ENCODE measurements at regions of chr7 and their contacts with region 1.

Region 1: GRCh38 chr7:151017953-151018420 is 6.3 kb downstream of the ATG9B start:
- DNase-seq: peak; percentile 83
- ATAC-seq: peak; percentile 72
- H3K4me3 Mint-ChIP-seq: peak overlapping the region; percentile 85
- H3K27ac Mint-ChIP-seq: no peak overlapping the region
- H3K4me1 Mint-ChIP-seq: peaks cover 45% of the 10 kb centered on the region
- H3K27me3 Mint-ChIP-seq: peaks cover 32% of the 10 kb centered on the region
- CTCF ChIP-seq: peak; percentile 78

Region 2: DNA sequence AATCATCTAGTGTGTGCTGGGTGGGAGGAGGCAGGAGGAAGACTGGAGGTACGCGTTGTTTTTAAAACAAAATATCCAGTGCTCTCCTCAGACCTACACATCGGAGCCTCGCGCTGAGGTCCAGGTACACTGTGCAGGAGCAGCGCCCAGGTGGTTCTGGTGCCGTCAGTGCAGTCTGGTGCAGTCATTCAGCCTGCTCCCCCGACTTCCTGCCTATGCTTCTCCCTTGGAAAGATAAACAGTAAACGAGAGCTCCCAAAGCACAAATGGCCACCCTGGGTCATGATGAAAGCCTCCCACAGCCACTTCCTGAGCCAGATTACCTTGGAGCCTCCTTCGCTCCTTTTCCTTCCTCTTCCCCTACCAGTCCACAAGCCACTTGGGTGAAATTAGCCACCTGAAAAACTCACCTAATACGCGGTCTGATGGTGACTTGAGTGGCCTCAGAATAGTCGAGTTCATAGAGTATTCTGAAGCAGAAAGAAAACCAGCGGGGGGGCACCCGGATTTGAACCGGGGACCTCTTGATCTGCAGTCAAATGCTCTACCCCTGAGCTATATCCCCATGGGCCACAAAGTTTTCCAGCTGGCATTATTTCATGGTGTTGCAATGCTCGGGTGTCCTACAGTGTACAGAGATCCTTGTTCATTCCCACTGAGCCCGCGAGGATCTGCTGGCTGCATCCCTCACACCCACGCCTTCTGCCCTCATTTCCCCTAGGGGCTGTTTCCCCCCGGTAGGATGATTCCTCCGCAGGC is 1327.1 kb before region 1 on chr7:
- CTCF ChIA-PET with region 1: no interaction called
- POLR2A ChIA-PET with region 1: no interaction called
- intact Hi-C with region 1: no loop called
- DNase-seq: no peak
- ATAC-seq: no peak
- H3K4me3 Mint-ChIP-seq: no peak overlapping the region
- H3K27ac Mint-ChIP-seq: no peak overlapping the region
- H3K4me1 Mint-ChIP-seq: no peaks in the 10 kb centered on the region
- H3K27me3 Mint-ChIP-seq: peaks cover 51% of the 10 kb centered on the region
- CTCF ChIP-seq: no peak

Region 3: GRCh38 chr7:150595361-150595760 is 422.6 kb before region 1 on chr7:
- CTCF ChIA-PET with region 1: no interaction called
- POLR2A ChIA-PET with region 1: no interaction called
- intact Hi-C with region 1: no loop called
- DNase-seq: no peak
- ATAC-seq: no peak
- H3K4me3 Mint-ChIP-seq: no peak overlapping the region
- H3K27ac Mint-ChIP-seq: no peak overlapping the region
- H3K4me1 Mint-ChIP-seq: no peaks in the 10 kb centered on the region
- H3K27me3 Mint-ChIP-seq: peaks cover 7% of the 10 kb centered on the region
- CTCF ChIP-seq: no peak

Region 4: GRCh38 chr7:150898475-150899011 is 119.4 kb before region 1 on chr7:
- CTCF ChIA-PET with region 1: interaction called, 5 read pairs
- POLR2A ChIA-PET with region 1: no interaction called
- intact Hi-C with region 1: loop called (anchors 1 kb)
- DNase-seq: peak; percentile 69
- ATAC-seq: peak; percentile 78
- H3K4me3 Mint-ChIP-seq: peak overlapping the region; percentile 24
- H3K27ac Mint-ChIP-seq: no peak overlapping the region
- H3K4me1 Mint-ChIP-seq: peaks cover 33% of the 10 kb centered on the region
- H3K27me3 Mint-ChIP-seq: peaks cover 38% of the 10 kb centered on the region
- CTCF ChIP-seq: peak; percentile 92

Region 5: GRCh38 chr7:150927956-150928344 is 90.0 kb before region 1 on chr7:
- CTCF ChIA-PET with region 1: no interaction called
- POLR2A ChIA-PET with region 1: no interaction called
- intact Hi-C with region 1: no loop called
- DNase-seq: no peak
- ATAC-seq: no peak
- H3K4me3 Mint-ChIP-seq: no peak overlapping the region
- H3K27ac Mint-ChIP-seq: no peak overlapping the region
- H3K4me1 Mint-ChIP-seq: no peaks in the 10 kb centered on the region
- H3K27me3 Mint-ChIP-seq: peaks cover 32% of the 10 kb centered on the region
- CTCF ChIP-seq: no peak

Region 6: GRCh38 chr7:150974468-150975391 is 43.3 kb before region 1 on chr7:
- CTCF ChIA-PET with region 1: no interaction called
- POLR2A ChIA-PET with region 1: interaction called, 4 read pairs
- intact Hi-C with region 1: loop called (anchors 2 kb)
- DNase-seq: peak; percentile 54
- ATAC-seq: peak; percentile 84
- H3K4me3 Mint-ChIP-seq: peak overlapping the region; percentile 85
- H3K27ac Mint-ChIP-seq: no peak overlapping the region
- H3K4me1 Mint-ChIP-seq: peaks cover 41% of the 10 kb centered on the region
- H3K27me3 Mint-ChIP-seq: peaks cover 29% of the 10 kb centered on the region
- CTCF ChIP-seq: no peak

Region 7: GRCh38 chr7:151057989-151058780 is 40.2 kb after region 1 on chr7:
- CTCF ChIA-PET with region 1: no interaction called
- POLR2A ChIA-PET with region 1: interaction called, 3 read pairs
- intact Hi-C with region 1: loop called (anchors 1 kb)
- DNase-seq: peak; percentile 91
- ATAC-seq: peak; percentile 93
- H3K4me3 Mint-ChIP-seq: peak overlapping the region; percentile 92
- H3K27ac Mint-ChIP-seq: peak overlapping the region; percentile 89
- H3K4me1 Mint-ChIP-seq: peaks cover 36% of the 10 kb centered on the region
- H3K27me3 Mint-ChIP-seq: no peaks in the 10 kb centered on the region
- CTCF ChIP-seq: no peak

Region 8: DNA sequence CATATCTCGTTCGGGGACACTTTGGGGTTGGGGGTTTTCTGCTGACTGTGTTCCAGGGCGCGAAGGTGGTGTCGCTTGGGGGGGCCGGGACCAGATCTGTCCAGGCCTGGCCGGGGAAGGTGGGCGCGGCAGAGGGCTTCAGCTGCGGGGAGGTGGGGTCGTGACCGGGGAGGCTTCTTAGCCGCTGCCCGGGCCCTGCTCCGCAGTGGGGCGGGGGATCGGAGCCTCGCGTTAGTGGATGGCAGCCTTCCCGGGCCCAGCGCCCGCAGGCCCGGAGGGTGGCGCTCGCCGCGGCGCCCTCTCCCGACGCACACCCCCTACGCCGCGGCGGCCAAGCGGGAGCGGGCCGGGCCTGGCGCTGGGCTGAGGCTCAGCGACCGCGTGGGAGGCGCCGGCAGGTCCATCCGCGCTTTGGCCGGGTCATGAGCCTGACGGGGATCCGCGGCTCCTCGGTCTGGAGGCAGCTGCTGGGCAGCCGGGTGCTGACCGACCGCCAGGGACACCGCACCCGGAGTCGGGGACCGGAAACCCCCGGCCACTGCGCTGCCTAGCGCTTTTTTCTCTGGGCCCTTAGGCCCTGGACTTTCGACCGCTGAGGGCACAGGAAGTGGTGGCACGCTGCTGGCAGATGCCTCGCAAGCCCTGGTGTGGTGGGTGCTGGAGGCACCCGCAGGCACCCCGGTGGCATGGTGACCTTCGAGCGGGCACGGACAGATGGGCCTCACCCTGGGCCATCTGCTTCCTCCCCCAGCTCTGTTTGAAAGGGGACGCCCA is 69.4 kb after region 1 on chr7:
- CTCF ChIA-PET with region 1: interaction called, 3 read pairs
- POLR2A ChIA-PET with region 1: no interaction called
- intact Hi-C with region 1: loop called (anchors 2 kb)
- DNase-seq: peak; percentile 50
- ATAC-seq: no peak
- H3K4me3 Mint-ChIP-seq: peak overlapping the region; percentile 86
- H3K27ac Mint-ChIP-seq: no peak overlapping the region
- H3K4me1 Mint-ChIP-seq: peaks cover 40% of the 10 kb centered on the region
- H3K27me3 Mint-ChIP-seq: peaks cover 21% of the 10 kb centered on the region
- CTCF ChIP-seq: no peak

Region 9: DNA sequence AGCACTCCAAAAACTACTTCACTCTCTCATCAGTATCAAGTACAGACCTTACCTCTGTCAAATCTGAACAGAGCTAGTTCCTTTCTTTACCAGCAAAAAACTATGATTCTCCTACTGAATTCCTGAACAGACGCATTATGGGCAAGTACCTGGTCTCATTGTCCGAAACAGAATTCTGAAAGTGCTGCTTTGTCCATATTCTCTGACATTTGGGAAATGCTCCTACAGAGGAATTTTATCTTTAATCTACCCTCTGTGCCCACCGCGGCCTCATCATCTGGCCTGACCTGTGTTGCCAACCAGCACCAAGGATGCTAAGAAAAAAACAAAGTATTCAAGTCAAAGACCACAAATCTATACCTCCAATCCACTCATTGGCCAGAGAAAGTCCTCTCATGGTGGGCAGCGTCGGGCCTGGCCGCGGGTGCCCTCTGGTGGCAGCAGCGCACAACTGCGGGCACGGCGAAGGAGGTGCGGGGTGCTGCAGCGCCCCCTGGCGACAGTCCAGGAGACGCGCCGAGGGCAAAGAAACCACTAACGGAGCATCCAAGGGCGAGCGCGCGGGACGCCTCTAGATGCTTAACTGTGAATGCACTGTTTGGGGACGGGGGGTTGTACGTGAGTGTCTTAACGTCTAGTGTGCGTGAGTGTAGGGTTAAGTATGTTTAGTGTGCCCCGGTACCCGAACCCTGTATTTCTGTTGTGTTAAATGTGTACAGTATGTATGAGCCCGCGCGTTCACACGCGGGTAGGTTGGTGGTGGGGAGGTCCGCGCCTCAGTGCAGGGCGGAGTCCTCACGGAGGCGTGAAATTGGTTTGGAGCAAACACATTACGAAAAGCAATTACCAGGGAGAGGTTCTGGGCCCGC is 154.5 kb after region 1 on chr7:
- CTCF ChIA-PET with region 1: no interaction called
- POLR2A ChIA-PET with region 1: no interaction called
- intact Hi-C with region 1: loop called (anchors 2 kb)
- DNase-seq: peak; percentile 72
- ATAC-seq: peak; percentile 86
- H3K4me3 Mint-ChIP-seq: no peak overlapping the region
- H3K27ac Mint-ChIP-seq: no peak overlapping the region
- H3K4me1 Mint-ChIP-seq: peaks cover 6% of the 10 kb centered on the region
- H3K27me3 Mint-ChIP-seq: peaks cover 56% of the 10 kb centered on the region
- CTCF ChIP-seq: peak; percentile 100

Region 10: DNA sequence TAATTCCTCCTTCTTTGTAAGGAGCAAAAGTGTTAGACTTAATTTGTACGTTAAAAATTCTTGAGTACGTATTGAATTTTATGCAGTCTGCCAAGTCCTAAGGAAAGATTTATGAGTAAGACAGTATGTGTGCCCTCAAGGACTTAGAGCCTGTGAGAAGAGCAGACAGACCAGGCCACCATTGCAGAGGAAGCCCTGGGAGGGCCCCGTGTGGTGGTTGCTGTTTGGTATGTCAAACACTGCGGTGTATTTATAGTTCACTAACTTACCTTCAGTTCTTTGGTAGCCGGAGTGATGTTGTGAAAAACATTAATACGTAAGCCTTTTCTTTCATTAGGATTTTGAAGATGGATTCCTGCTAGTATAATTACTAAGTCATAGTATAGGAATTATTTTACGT is 1090.4 kb after region 1 on chr7:
- CTCF ChIA-PET with region 1: no interaction called
- POLR2A ChIA-PET with region 1: no interaction called
- intact Hi-C with region 1: no loop called
- DNase-seq: no peak
- ATAC-seq: no peak
- H3K4me3 Mint-ChIP-seq: no peak overlapping the region
- H3K27ac Mint-ChIP-seq: no peak overlapping the region
- H3K4me1 Mint-ChIP-seq: no peaks in the 10 kb centered on the region
- H3K27me3 Mint-ChIP-seq: no peaks in the 10 kb centered on the region
- CTCF ChIP-seq: no peak

Measured in activated B cell treated with CpG ODN at 0.5 μM for 24 hours (primary cell).